Activated CD4-positive, alpha-beta T cell treated with anti-CD3 and anti-CD28 coated beads, Interleukin-2, amount 10 ng/mL, durations not matched to agents 7 days and 5 days (primary cell): ENCODE measurements at regions of chr15 and their contacts with region 1.

Region 1: GRCh38 chr15:48946088-48946839 is 17.5 kb downstream of the SHC4 start:
- DNase-seq: no peak
- H3K4me3 Mint-ChIP-seq: no peak overlapping the region
- H3K27ac Mint-ChIP-seq: no peak overlapping the region
- H3K4me1 Mint-ChIP-seq: peaks cover 13% of the 10 kb centered on the region
- H3K27me3 Mint-ChIP-seq: peaks cover 11% of the 10 kb centered on the region

Region 2: DNA sequence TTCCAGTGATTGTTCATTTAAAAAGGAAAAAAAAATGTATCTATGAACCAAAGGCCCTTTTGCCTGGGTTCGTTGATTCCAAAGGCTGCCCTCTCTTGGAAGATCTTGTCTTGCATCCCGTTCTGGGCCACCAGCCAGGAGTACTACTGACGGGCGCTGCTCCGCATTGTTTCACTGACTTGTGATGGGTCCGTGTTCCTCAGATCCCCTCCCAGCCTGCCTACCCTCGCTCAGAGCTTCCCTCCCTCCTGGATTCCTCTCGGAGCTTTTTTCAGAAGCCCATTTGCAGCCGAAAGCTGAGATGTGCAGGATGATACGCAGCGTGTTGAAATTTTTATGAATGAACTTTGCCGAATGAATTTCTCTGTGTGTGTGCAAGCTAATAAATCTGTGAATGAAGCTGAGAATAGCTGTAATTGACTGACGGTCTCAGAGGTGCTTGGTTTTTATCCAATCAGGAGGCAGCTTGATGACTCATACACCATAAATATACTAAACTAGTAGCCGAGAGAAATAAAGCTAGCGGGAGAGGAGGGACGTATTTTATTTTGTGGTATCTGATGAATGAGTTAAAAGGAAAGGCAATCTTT is 17.4 kb after region 1 on chr15 and contains the start of gene SHC4:
- CTCF ChIA-PET with region 1: interaction called, 10 read pairs
- POLR2A ChIA-PET with region 1: no interaction called
- DNase-seq: peak; percentile 30
- H3K4me3 Mint-ChIP-seq: peak within 1 kb of the TSS; percentile 63
- H3K27ac Mint-ChIP-seq: peak within 1 kb of the TSS; percentile 48
- H3K4me1 Mint-ChIP-seq: peaks cover 45% of the 10 kb centered on the region
- H3K27me3 Mint-ChIP-seq: peaks cover 43% of the 10 kb centered on the region
- total RNA-seq, gene SHC4: 0.30 to 0.46 TPM